Endothelial cell of umbilical vein (primary cell): ENCODE measurements at regions of chr17 and their contacts with region 1.

Region 1: DNA sequence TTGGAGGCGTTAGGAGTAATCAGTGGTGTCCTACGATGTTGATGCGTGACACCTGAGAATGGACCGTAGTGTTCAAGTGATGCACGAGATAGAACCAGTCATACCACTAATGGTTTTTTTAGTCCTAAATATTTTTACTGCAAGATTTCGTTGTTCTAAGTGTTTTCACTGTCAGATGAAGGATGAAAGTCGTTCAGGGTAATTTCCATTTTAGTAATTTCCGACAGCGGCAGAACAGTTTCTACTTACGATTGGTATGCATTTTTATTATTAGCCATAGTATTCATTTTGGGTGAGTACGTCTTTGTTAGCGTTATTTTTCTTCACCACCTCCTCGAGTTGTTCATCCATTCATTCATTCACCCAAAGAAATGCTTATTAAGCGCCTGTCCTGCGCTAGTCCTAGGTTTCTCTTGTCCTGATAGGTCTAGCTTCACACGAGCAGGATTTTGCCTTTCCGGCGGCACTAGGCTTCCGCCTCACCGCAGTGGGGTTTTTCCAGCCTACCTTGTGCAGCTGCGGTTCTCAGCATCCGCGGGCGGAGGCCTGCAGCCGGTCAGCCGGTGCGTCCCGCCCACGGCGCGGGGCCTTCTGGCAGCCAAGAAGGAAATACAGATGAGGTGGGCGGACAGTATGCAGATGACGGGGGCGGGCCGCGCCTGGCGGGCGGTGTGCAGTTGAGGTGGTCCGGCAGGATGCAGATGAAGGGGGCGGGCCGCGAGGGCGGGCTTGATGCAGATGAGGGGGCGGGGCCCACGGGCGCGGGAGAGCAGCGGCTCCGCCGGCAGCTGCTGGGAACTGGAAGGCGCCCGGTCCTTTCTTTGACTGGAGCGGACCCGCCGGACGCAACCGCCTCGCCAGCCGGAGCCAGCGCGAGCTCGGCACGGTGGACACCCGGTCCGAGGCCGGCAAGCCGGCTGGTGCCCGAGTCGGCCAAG is 146.4 kb downstream of the SPECC1 start:
- DNase-seq: peak; percentile 96
- H3K4me3 ChIP-seq: peak overlapping the region; percentile 33 to 52 (median 49)
- H3K27ac ChIP-seq: no peak overlapping the region
- H3K4me1 ChIP-seq: peaks cover 7% of the 10 kb centered on the region
- H3K27me3 ChIP-seq: peaks cover 0 to 9% of the 10 kb centered on the region in 2 experiments
- CTCF ChIP-seq: no peak
- POLR2A ChIP-seq: no peak

Region 2: DNA sequence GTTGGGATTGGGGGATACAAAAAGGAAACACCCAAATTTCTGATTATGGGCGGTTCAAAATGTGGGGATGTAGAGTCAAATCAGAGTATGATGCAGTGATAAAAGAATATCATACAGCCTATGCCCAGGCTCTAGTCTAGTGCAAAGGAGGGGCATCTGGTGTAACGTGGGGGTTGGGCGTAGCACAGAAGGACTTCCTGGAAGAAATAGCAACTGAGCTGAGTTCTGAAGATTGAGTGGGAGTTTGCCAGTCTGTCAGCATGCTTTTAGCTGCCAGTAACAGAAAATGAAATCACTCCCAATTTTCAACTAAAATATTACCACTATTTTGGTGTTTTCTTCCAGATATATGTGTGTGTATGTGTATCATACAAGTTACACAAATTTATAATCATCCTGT is 50.5 kb after region 1 on chr17:
- CTCF ChIA-PET with region 1: interaction called, 5 read pairs
- POLR2A ChIA-PET with region 1: no interaction called
- dilution Hi-C with region 1: no loop called
- intact Hi-C with region 1: loop called (anchors 5 kb)
- DNase-seq: peak; percentile 37
- H3K4me3 ChIP-seq: no peak overlapping the region
- H3K27ac ChIP-seq: peak overlapping the region; percentile 34
- H3K4me1 ChIP-seq: peaks cover 17% of the 10 kb centered on the region
- H3K27me3 ChIP-seq: no peaks in the 10 kb centered on the region
- CTCF ChIP-seq: no peak
- POLR2A ChIP-seq: no peak

Region 3: GRCh38 chr17:21551081-21551881 is 1395.8 kb after region 1 on chr17:
- CTCF ChIA-PET with region 1: no interaction called
- POLR2A ChIA-PET with region 1: no interaction called
- dilution Hi-C with region 1: no loop called
- intact Hi-C with region 1: loop called (anchors 10 kb)
- DNase-seq: peak; percentile 88
- H3K4me3 ChIP-seq: peak overlapping the region; percentile 54 to 82 (median 75)
- H3K27ac ChIP-seq: peak overlapping the region; percentile 41
- H3K4me1 ChIP-seq: peaks cover 7% of the 10 kb centered on the region
- H3K27me3 ChIP-seq: no peaks in the 10 kb centered on the region
- CTCF ChIP-seq: no peak
- POLR2A ChIP-seq: peak; percentile 75